CD4-positive, alpha-beta memory T cell (primary cell): ENCODE measurements at regions of chr4 and their contacts with region 1.

Region 1: DNA sequence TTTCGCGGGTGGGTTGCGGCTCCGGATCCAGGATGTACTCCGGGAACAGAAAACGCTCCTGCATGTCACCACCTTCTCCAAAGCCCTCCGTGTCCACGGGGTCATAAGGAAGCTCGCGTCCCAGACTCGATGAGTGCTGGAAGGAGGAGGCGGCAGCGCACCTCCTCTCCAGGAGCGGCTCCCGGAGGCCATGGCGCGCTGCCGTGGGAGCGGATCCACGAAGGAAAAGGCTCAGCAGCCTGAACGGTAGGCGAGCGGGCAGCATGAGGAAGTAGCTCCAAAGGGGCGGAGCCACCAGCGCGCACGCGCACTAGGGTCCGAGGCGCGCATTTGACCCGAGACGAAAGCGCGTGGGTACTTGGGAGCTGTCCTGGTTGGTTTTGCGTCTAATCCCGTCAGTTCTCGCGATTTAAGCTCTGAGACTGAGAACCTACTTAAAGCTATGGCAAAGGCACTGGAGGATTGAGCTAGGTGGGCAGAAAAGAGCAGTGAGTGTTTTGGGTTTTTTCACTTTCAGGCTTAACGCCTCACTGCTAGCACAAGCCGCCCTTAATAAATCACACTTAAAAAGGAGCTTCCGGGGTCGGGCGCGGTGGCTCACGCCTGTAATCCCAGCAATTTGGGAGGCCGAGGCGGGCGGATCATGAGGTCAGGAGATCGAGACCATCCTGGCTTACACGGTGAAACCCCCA is at the start of gene NOA1:
- DNase-seq: peak; percentile 98 to 99 (median 99)
- H3K4me3 ChIP-seq: peak within 1 kb of the TSS; percentile 96 to 100
- H3K4me3 Mint-ChIP-seq: peak within 1 kb of the TSS; percentile 96 to 100 (median 99)
- H3K27ac ChIP-seq: peak within 1 kb of the TSS; percentile 85
- H3K27ac Mint-ChIP-seq: peak within 1 kb of the TSS; percentile 93 to 99 (median 98)
- H3K4me1 ChIP-seq: peaks cover 56% of the 10 kb centered on the region
- H3K4me1 Mint-ChIP-seq: peaks cover 28 to 79% (median 46%) of the 10 kb centered on the region in 4 donors
- H3K27me3 ChIP-seq: no peaks in the 10 kb centered on the region
- H3K27me3 Mint-ChIP-seq: no peaks in the 10 kb centered on the region
- total RNA-seq, gene NOA1: 20.1 to 20.4 TPM

Region 2: GRCh38 chr4:55395529-55396307 is 1581.7 kb before region 1 on chr4 and contains the start of gene TMEM165:
- CTCF ChIA-PET with region 1: no interaction called
- POLR2A ChIA-PET with region 1: no interaction called
- intact Hi-C with region 1: loop called (anchors 5 kb)
- DNase-seq: peak; percentile 88 to 92 (median 90)
- H3K4me3 ChIP-seq: peak within 1 kb of the TSS; percentile 74 to 75
- H3K4me3 Mint-ChIP-seq: peak within 1 kb of the TSS; percentile 92 to 98 (median 96)
- H3K27ac ChIP-seq: peak within 1 kb of the TSS; percentile 84
- H3K27ac Mint-ChIP-seq: peak within 1 kb of the TSS; percentile 93 to 99 (median 98)
- H3K4me1 ChIP-seq: peaks cover 39% of the 10 kb centered on the region
- H3K4me1 Mint-ChIP-seq: peaks cover 30 to 48% (median 38%) of the 10 kb centered on the region in 4 donors
- H3K27me3 ChIP-seq: no peaks in the 10 kb centered on the region
- H3K27me3 Mint-ChIP-seq: no peaks in the 10 kb centered on the region
- total RNA-seq, gene TMEM165: 61.8 to 74.8 TPM

Region 3: GRCh38 chr4:56387023-56388001 is 590.2 kb before region 1 on chr4 and contains the start of gene AASDH:
- CTCF ChIA-PET with region 1: interaction called, 4 read pairs
- POLR2A ChIA-PET with region 1: interaction called, 42 read pairs
- intact Hi-C with region 1: loop called (anchors 1 kb)
- DNase-seq: peak; percentile 94 to 96 (median 95)
- H3K4me3 ChIP-seq: peak within 1 kb of the TSS; percentile 63 to 94
- H3K4me3 Mint-ChIP-seq: peak within 1 kb of the TSS; percentile 91 to 100 (median 96)
- H3K27ac ChIP-seq: peak within 1 kb of the TSS; percentile 81
- H3K27ac Mint-ChIP-seq: peak within 1 kb of the TSS; percentile 98 to 100 (median 99)
- H3K4me1 ChIP-seq: peaks cover 20% of the 10 kb centered on the region
- H3K4me1 Mint-ChIP-seq: peaks cover 21 to 48% (median 37%) of the 10 kb centered on the region in 4 donors
- H3K27me3 ChIP-seq: no peaks in the 10 kb centered on the region
- H3K27me3 Mint-ChIP-seq: no peaks in the 10 kb centered on the region
- total RNA-seq, gene AASDH: 19.2 to 23.7 TPM

Region 4: DNA sequence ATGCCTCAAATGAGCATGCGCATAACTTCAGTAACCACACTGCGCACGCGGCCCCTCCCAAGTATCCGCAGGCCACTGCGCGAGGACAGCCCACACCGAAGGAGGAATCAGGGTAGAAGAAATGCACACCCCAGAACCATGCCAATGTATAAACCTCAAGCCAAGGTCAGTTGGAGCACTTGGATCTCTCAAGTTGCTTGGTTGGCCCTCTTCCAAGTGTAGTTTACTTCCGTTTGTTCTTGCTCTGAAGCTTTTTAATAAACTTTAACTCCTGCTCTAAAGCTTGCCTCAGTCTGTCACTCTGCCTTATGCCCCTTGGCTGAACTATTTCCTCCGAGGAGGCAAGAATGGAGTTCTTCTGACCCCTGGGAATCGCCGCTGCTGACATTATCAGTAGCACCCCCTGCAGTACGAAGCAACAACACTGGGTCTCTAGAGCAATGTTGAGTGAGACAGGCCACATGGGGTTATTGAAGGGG is 134.0 kb before region 1 on chr4:
- CTCF ChIA-PET with region 1: no interaction called
- POLR2A ChIA-PET with region 1: no interaction called
- intact Hi-C with region 1: no loop called
- DNase-seq: no peak
- H3K4me3 ChIP-seq: no peak overlapping the region
- H3K4me3 Mint-ChIP-seq: no peak overlapping the region
- H3K27ac ChIP-seq: no peak overlapping the region
- H3K27ac Mint-ChIP-seq: no peak overlapping the region
- H3K4me1 ChIP-seq: no peaks in the 10 kb centered on the region
- H3K4me1 Mint-ChIP-seq: no peaks in the 10 kb centered on the region
- H3K27me3 ChIP-seq: no peaks in the 10 kb centered on the region
- H3K27me3 Mint-ChIP-seq: peaks cover 0 to 2% of the 10 kb centered on the region in 2 donors

Region 5: DNA sequence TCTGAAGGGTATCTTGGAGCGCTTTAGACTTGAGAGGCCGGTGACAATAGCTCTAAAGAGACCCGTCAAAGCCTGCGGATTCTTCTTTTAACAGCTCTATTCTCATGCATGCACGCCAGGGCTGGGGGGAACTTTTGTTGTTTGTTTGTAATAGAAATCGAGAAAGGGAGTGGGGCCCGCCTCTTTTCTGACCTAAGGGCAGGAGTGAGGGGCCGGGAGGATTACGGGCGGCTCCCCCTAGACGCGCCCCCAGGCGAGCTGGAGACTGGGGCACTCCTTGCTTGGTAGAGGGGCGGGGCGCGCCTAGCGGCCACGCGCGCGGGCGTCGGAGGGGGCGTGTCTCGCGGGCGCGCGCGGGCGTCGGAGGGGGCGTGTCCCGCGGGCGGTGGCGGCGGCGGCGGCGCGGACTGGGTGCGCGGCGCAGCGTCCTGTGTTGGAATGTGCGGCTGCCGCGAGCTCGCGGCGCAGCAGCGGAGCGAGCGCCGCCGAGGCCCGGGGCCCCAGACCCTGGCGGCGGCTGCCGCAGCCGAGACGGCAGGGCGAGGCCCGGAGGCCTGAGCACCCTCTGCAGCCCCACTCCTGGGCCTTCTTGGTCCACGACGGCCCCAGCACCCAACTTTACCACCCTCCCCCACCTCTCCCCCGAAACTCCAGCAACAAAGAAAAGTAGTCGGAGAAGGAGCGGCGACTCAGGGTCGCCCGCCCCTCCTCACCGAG is 69.8 kb before region 1 on chr4 and contains the start of gene REST:
- CTCF ChIA-PET with region 1: interaction called, 24 read pairs
- POLR2A ChIA-PET with region 1: interaction called, 192 read pairs
- intact Hi-C with region 1: loop called (anchors 1 kb)
- DNase-seq: peak; percentile 80 to 91 (median 86)
- H3K4me3 ChIP-seq: peak within 1 kb of the TSS; percentile 58 to 79
- H3K4me3 Mint-ChIP-seq: peak within 1 kb of the TSS; percentile 89 to 97 (median 93)
- H3K27ac ChIP-seq: peak within 1 kb of the TSS; percentile 85
- H3K27ac Mint-ChIP-seq: peak within 1 kb of the TSS; percentile 87 to 97 (median 93)
- H3K4me1 ChIP-seq: peaks cover 42% of the 10 kb centered on the region
- H3K4me1 Mint-ChIP-seq: peaks cover 30 to 54% (median 43%) of the 10 kb centered on the region in 4 donors
- H3K27me3 ChIP-seq: no peaks in the 10 kb centered on the region
- H3K27me3 Mint-ChIP-seq: no peaks in the 10 kb centered on the region
- total RNA-seq, gene REST: 77.3 to 79.2 TPM

Region 6: DNA sequence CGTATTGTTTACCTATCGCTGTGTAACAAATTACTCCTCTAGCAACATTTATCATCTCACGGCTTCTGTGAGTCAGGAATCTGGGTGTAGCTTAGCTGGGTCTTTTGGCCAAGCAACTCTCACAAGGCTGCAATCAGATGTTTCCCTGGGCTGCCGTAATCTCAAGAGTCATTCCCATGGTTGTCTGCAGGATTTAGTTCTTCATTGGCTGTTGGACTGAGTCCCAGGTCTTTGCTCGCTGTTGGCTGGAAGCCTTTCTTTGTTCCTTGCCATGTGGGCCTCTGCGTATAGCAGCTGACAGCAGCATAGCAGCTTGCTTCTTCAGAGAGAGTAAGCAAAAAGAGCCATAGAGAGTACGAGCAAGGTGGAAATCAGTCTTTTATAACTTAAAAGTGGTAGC is 18.1 kb after region 1 on chr4:
- CTCF ChIA-PET with region 1: interaction called, 6 read pairs
- POLR2A ChIA-PET with region 1: interaction called, 10 read pairs
- intact Hi-C with region 1: no loop called
- DNase-seq: no peak
- H3K4me3 ChIP-seq: no peak overlapping the region
- H3K4me3 Mint-ChIP-seq: no peak overlapping the region
- H3K27ac ChIP-seq: no peak overlapping the region
- H3K27ac Mint-ChIP-seq: no peak overlapping the region
- H3K4me1 ChIP-seq: peaks cover 5% of the 10 kb centered on the region
- H3K4me1 Mint-ChIP-seq: peaks cover 15 to 30% (median 24%) of the 10 kb centered on the region in 4 donors
- H3K27me3 ChIP-seq: no peaks in the 10 kb centered on the region
- H3K27me3 Mint-ChIP-seq: no peaks in the 10 kb centered on the region

Region 7: GRCh38 chr4:57053508-57053907 is 76.0 kb after region 1 on chr4:
- CTCF ChIA-PET with region 1: no interaction called
- POLR2A ChIA-PET with region 1: no interaction called
- intact Hi-C with region 1: no loop called
- DNase-seq: no peak
- H3K4me3 ChIP-seq: no peak overlapping the region
- H3K4me3 Mint-ChIP-seq: no peak overlapping the region
- H3K27ac ChIP-seq: no peak overlapping the region
- H3K27ac Mint-ChIP-seq: no peak overlapping the region
- H3K4me1 ChIP-seq: no peaks in the 10 kb centered on the region
- H3K4me1 Mint-ChIP-seq: no peaks in the 10 kb centered on the region
- H3K27me3 ChIP-seq: no peaks in the 10 kb centered on the region
- H3K27me3 Mint-ChIP-seq: peaks cover 28 to 37% of the 10 kb centered on the region in 2 donors

Region 8: DNA sequence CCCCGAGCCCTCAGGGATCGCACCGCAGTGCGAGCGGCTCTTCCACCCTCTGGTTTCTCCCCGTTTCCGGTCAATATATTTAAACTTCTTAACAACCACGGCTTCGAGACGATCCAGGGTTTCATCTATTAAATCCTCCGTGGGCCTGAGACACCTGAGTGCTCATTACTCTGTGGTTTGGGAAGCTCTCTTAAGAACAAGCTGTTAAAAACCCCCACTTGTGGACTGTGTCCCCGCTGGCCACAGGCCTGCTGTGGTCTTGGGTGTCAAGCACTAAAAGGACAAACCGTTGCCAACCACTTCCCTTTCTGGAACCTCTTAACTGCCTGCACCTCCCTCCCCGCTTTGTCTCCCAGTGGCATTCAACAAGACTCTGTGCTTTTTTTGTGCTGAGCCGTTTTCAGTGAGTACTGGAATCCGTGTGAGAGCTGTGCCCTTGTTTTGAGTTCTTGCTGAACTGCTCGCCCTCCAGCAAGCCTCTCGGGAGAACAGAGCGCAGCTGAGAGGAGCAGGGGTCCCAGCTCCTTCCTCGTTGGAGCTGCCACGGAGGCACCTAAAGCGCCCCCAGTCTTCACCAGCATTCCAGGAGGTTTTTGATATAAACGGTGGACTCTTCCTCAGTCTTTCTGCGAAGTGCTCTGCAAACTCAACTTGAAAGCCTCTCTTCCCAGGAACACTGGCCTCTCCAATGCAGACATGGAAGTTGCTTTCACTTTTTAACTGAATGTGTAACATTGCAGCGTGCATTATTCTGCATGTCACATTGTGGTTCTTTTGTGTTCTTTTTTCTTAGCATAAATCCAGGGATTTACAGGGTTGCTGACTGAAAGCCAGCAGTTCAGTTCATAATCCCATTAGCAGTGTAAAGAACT is 133.4 kb after region 1 on chr4:
- CTCF ChIA-PET with region 1: no interaction called
- POLR2A ChIA-PET with region 1: no interaction called
- intact Hi-C with region 1: no loop called
- DNase-seq: no peak
- H3K4me3 ChIP-seq: no peak overlapping the region
- H3K4me3 Mint-ChIP-seq: peak overlapping the region; percentile 77 to 95 (median 82)
- H3K27ac ChIP-seq: no peak overlapping the region
- H3K27ac Mint-ChIP-seq: peak overlapping the region in 2 of 7 donors; percentile 12 to 37
- H3K4me1 ChIP-seq: peaks cover 10% of the 10 kb centered on the region
- H3K4me1 Mint-ChIP-seq: peaks cover 8 to 17% (median 10%) of the 10 kb centered on the region in 4 donors
- H3K27me3 ChIP-seq: peaks cover 13% of the 10 kb centered on the region
- H3K27me3 Mint-ChIP-seq: peaks cover 49 to 54% of the 10 kb centered on the region in 2 donors